ENCODE measurements at regions of chr6 and their contacts with region 1.

Region 1: DNA sequence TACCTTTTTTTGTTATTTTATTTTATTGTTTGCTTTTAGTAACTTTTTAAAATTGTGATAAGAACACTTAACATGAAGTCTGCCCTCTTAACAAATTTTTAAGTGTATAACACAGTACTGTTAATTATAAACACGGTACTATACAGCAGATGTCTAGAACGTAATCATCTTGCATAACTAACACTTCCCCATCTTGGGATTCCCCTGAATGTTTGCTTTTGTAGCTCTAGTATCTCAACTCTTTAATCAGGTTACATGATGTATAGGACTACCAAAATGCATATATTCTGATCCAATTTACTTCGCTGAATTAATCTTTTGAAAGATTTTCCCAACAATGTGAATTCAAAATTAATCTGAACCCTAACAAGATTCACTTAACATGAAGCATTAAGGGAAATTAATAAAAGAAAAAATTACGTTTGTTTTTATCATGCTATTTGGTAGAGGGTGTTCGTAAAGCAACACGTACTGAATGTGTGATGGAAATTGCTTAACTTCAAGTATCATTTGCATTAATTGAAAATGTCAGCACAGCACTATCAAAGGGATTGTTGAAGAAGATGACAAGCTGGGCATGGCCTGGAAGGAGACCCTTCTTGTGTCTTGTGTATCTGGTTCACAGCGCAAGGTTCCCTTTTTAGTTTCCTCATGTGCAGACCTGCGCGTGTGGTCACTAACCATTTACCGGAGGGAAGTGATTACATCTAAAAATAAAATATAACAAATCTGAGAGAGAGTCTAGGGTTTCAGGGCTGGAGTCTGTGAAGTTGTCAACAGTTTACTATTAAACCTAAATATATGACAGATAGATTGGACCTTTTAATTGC is 15.2 kb downstream of the COL19A1 start:
- DNase-seq: peak; percentile 88
- ATAC-seq: peak; percentile 87
- H3K4me3 ChIP-seq: peak overlapping the region; percentile 9 to 67 (median 28)
- H3K4me3 Mint-ChIP-seq: peak overlapping the region; percentile 84
- H3K27ac ChIP-seq: peak overlapping the region; percentile 99 to 100
- H3K27ac Mint-ChIP-seq: peak overlapping the region; percentile 95
- H3K4me1 ChIP-seq: peaks cover 56 to 81% of the 10 kb centered on the region in 2 donors
- H3K4me1 Mint-ChIP-seq: peaks cover 69% of the 10 kb centered on the region
- H3K27me3 ChIP-seq: no peaks in the 10 kb centered on the region
- H3K27me3 Mint-ChIP-seq: no peaks in the 10 kb centered on the region
- CTCF ChIP-seq: no peak

Region 2: GRCh38 chr6:69813508-69813907 is 68.0 kb before region 1 on chr6:
- CTCF ChIA-PET with region 1: interaction called, 3 read pairs
- POLR2A ChIA-PET with region 1: interaction called, 6 read pairs
- intact Hi-C with region 1: loop called (anchors 2 kb)
- DNase-seq: peak; percentile 55
- ATAC-seq: peak; percentile 68
- H3K4me3 ChIP-seq: peak overlapping the region in 2 of 5 experiments; percentile 9 to 42
- H3K4me3 Mint-ChIP-seq: peak overlapping the region; percentile 64
- H3K27ac ChIP-seq: peak overlapping the region; percentile 85 to 89
- H3K27ac Mint-ChIP-seq: peak overlapping the region; percentile 85
- H3K4me1 ChIP-seq: peaks cover 51 to 62% of the 10 kb centered on the region in 2 donors
- H3K4me1 Mint-ChIP-seq: peaks cover 72% of the 10 kb centered on the region
- H3K27me3 ChIP-seq: no peaks in the 10 kb centered on the region
- H3K27me3 Mint-ChIP-seq: no peaks in the 10 kb centered on the region
- CTCF ChIP-seq: no peak

Region 3: GRCh38 chr6:70667711-70668498 is 786.4 kb after region 1 on chr6 and contains the start of gene SMAP1:
- CTCF ChIA-PET with region 1: no interaction called
- POLR2A ChIA-PET with region 1: no interaction called
- intact Hi-C with region 1: loop called (anchors 10 kb)
- DNase-seq: peak; percentile 95
- ATAC-seq: peak; percentile 97
- H3K4me3 ChIP-seq: peak within 1 kb of the TSS; percentile 69 to 92 (median 82)
- H3K4me3 Mint-ChIP-seq: peak within 1 kb of the TSS; percentile 90
- H3K27ac ChIP-seq: peak within 1 kb of the TSS; percentile 60 to 83
- H3K27ac Mint-ChIP-seq: peak within 1 kb of the TSS; percentile 93
- H3K4me1 ChIP-seq: peaks cover 17 to 23% of the 10 kb centered on the region in 2 donors
- H3K4me1 Mint-ChIP-seq: peaks cover 37% of the 10 kb centered on the region
- H3K27me3 ChIP-seq: no peaks in the 10 kb centered on the region
- H3K27me3 Mint-ChIP-seq: peaks cover 6% of the 10 kb centered on the region
- CTCF ChIP-seq: no peak
- total RNA-seq, gene SMAP1: 19.7 and 21.7 TPM in 2 replicates

Measured in B cell (primary cell).